WTC11 (cell line): ENCODE measurements at regions of chr1 and their contacts with region 1.

Region 1: GRCh38 chr1:227999056-227999930 is 7.5 kb upstream of the WNT3A start:
- DNase-seq: peak; percentile 88
- ATAC-seq: peak; percentile 93
- H3K4me3 Mint-ChIP-seq: no peak overlapping the region
- H3K27ac Mint-ChIP-seq: no peak overlapping the region
- H3K4me1 Mint-ChIP-seq: peaks cover 5% of the 10 kb centered on the region; the same call in 1 of the 2 replicates
- H3K27me3 Mint-ChIP-seq: peaks cover 96% of the 10 kb centered on the region
- CTCF ChIP-seq: peak; percentile 74

Region 2: DNA sequence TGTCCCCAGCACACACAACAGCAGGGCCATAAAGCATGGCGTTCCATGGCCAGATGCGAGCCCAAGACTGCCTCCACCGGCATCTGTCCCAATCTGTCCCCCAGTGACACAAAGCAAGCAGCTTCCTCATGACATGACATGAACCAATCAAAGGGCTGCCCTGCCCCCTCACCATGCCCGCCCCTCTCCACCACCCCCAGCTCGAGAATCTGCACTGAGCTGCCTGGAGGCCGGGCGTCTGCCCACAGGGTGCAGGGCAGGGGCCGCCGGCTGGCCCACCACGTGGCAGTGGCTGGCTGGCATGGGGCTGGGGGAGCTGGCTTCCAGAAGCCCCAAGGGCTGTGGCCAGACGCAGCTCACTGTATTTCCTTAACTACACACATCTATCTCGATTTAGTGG is 79.4 kb before region 1 on chr1:
- CTCF ChIA-PET with region 1: no interaction called
- POLR2A ChIA-PET with region 1: no interaction called
- DNase-seq: peak; percentile 52
- ATAC-seq: peak; percentile 74
- H3K4me3 Mint-ChIP-seq: no peak overlapping the region
- H3K27ac Mint-ChIP-seq: peak overlapping the region; percentile 73
- H3K4me1 Mint-ChIP-seq: peaks cover 12% of the 10 kb centered on the region
- H3K27me3 Mint-ChIP-seq: no peaks in the 10 kb centered on the region
- CTCF ChIP-seq: no peak

Region 3: DNA sequence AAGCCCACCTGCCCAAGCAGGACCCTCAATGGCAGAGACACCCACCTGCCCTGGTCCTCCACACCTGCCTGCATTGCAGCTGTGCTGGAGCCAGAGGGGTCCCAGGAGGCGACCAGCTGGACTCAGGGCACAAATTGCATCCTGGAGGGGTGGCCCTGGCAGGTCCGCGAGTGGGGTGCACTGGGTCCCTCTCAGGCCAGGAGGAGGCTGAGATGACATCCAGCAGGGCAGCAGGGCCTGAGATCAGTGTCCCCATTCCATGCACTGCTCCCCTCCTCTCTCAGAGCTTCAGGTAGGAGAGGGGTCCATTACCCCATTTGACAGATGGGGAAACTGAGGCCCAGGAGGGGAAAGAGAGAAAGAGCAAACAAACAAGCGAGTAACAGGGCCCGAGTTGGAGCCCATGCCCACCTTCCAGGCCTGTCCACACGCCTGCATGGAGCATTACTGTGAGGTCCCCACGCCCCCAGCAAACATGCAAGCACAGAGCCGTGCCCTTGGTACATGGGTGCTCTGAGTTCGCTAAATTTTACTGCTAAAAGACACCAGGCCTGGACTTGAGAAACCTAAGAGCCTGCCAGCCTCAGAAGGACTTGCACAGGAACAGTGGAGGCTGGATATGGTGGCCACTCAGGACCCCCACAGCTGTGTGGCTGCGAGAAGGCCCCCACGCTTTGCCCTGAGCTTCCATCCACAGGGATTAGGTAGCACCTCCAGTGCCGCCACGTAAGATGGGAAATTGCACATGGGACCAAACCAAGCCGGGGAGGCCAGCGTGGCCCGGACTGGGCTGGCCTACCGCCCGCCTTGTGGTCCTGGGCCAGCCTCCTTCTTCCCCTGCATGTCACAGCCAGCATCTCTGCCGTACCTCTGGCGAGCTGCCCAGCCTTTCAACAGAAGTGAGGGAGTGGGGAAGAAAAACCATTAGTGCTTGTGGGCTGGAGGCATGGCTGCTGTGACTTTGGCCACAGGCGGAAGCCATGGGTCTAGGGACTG is 14.9 kb after region 1 on chr1:
- CTCF ChIA-PET with region 1: interaction called, 25 read pairs
- POLR2A ChIA-PET with region 1: no interaction called
- DNase-seq: no peak
- ATAC-seq: no peak
- H3K4me3 Mint-ChIP-seq: no peak overlapping the region
- H3K27ac Mint-ChIP-seq: no peak overlapping the region
- H3K4me1 Mint-ChIP-seq: no peaks in the 10 kb centered on the region
- H3K27me3 Mint-ChIP-seq: peaks cover 72% of the 10 kb centered on the region
- CTCF ChIP-seq: no peak

Region 4: GRCh38 chr1:228059634-228060457 is 60.6 kb after region 1 on chr1:
- CTCF ChIA-PET with region 1: interaction called, 71 read pairs
- POLR2A ChIA-PET with region 1: no interaction called
- DNase-seq: peak; percentile 100
- ATAC-seq: peak; percentile 84
- H3K4me3 Mint-ChIP-seq: peak overlapping the region; percentile 74
- H3K27ac Mint-ChIP-seq: no peak overlapping the region
- H3K4me1 Mint-ChIP-seq: peaks cover 5% of the 10 kb centered on the region
- H3K27me3 Mint-ChIP-seq: peaks cover 87% of the 10 kb centered on the region
- CTCF ChIP-seq: no peak

Region 5: DNA sequence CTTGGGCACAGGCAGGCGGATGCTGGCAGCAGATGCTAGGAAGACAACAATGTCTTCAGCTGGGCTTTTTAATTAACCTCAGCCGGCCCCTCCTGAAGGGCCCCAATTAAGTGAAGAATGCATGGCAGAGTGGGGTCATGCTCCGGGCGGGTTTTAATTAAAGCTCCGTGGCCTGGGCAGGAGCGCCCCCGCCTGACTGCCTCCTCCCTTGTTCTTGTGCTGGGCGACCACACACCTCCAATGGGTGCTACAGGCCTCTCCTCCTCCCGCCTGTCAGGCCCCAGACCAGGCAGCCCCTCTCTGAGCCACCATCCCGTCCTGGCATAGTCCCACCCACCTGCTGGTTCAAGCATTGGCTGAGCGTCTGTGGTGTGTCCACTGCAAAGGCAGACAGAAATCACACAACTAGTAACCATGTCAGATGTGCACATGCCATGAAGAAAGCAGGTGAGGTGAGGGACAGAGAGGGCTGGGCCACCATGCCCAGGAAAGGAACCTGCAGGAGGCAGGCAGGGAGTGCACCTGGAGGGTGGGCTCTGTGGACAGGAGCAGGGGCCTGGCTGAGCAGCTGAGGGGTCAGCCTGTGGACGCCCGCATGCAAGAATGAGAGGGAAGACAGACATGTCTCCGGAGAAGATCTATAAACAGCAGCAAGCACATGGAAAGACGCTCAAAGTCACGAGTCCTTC is 74.7 kb after region 1 on chr1:
- CTCF ChIA-PET with region 1: interaction called, 62 read pairs
- POLR2A ChIA-PET with region 1: interaction called, 3 read pairs
- DNase-seq: peak; percentile 67
- ATAC-seq: peak; percentile 77
- H3K4me3 Mint-ChIP-seq: no peak overlapping the region
- H3K27ac Mint-ChIP-seq: no peak overlapping the region
- H3K4me1 Mint-ChIP-seq: peaks cover 8% of the 10 kb centered on the region
- H3K27me3 Mint-ChIP-seq: peaks cover 92% of the 10 kb centered on the region
- CTCF ChIP-seq: 0 out of 2 replicates have a peak, but pooled peaks have one; percentile 13

Region 6: GRCh38 chr1:228082135-228082891 is 83.0 kb after region 1 on chr1 and contains the start of gene ARF1:
- CTCF ChIA-PET with region 1: interaction called, 38 read pairs
- POLR2A ChIA-PET with region 1: no interaction called
- DNase-seq: peak; percentile 88
- ATAC-seq: peak; percentile 85
- H3K4me3 Mint-ChIP-seq: peak within 1 kb of the TSS; percentile 95
- H3K27ac Mint-ChIP-seq: peak within 1 kb of the TSS; percentile 94
- H3K4me1 Mint-ChIP-seq: peaks cover 33% of the 10 kb centered on the region
- H3K27me3 Mint-ChIP-seq: peaks cover 36% of the 10 kb centered on the region
- CTCF ChIP-seq: no peak
- total RNA-seq, gene ARF1: 295 to 330 TPM (median 300 TPM) in 3 replicates

Region 7: DNA sequence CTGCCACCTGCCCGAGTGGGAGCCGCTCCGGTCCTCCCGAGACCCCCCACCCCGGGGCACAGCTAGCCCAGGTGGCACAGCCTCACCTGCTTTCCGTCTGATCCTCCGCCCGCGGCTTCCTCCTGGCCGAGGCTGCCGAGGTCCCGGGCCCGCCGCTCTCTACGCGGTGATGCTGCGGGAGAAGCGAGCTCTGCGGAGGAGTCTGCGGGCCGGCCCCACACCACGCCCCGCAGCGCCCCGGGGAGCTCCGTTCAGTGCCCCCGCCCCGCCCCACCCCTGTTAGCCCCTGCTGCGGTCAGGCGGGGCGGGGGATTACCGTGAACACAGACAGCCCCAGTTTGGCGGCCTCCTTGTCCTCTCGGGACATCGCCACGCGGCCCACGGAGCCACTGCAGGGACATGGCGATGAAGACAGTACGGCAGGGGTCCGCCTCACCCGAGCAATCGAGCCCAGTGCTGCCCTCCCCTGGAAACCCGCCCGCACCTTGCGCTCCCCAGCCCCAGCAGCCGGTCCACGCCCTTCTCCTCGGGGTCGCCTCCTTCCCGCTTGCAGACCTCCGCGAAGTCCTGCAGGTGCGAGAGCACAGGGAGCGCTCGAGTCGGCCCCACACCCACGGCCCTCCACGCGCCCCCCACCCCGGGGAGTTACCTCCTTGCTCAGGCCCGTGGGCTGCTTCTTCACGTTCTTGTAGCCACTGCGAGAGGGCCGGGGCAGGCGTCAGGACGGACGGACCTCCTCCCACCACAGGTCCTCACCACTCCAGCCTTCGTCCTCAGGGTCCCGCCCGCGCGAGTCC is 102.9 kb after region 1 on chr1:
- CTCF ChIA-PET with region 1: interaction called, 14 read pairs
- POLR2A ChIA-PET with region 1: no interaction called
- DNase-seq: peak; percentile 51
- ATAC-seq: peak; percentile 38
- H3K4me3 Mint-ChIP-seq: peak overlapping the region; percentile 90
- H3K27ac Mint-ChIP-seq: no peak overlapping the region
- H3K4me1 Mint-ChIP-seq: peaks cover 13% of the 10 kb centered on the region
- H3K27me3 Mint-ChIP-seq: peaks cover 5% of the 10 kb centered on the region; the same call in 1 of the 2 replicates
- CTCF ChIP-seq: no peak

Region 8: GRCh38 chr1:228165372-228166169 is 166.3 kb after region 1 on chr1 and contains the start of gene IBA57:
- CTCF ChIA-PET with region 1: interaction called, 19 read pairs
- POLR2A ChIA-PET with region 1: no interaction called
- DNase-seq: peak; percentile 99
- ATAC-seq: peak; percentile 94
- H3K4me3 Mint-ChIP-seq: peak within 1 kb of the TSS; percentile 85
- H3K27ac Mint-ChIP-seq: peak within 1 kb of the TSS; percentile 98
- H3K4me1 Mint-ChIP-seq: peaks cover 13% of the 10 kb centered on the region; the same call in 1 of the 2 replicates
- H3K27me3 Mint-ChIP-seq: peaks cover 6% of the 10 kb centered on the region; the same call in 1 of the 2 replicates
- CTCF ChIP-seq: peak; percentile 71
- total RNA-seq, gene IBA57: 11.4 to 12.5 TPM (median 12.1 TPM) in 3 replicates